Ascending aorta (tissue), 2 donors: ENCODE measurements at regions of chr5 and their contacts with region 1.

Region 1: GRCh38 chr5:74167206-74167929 is 473.2 kb downstream of the ENC1 start:
- DNase-seq: no peak
- H3K4me3 ChIP-seq: no peak overlapping the region
- H3K27ac ChIP-seq: no peak overlapping the region
- H3K4me1 ChIP-seq: no peaks in the 10 kb centered on the region
- H3K27me3 ChIP-seq: no peaks in the 10 kb centered on the region
- CTCF ChIP-seq: no peak

Region 2: DNA sequence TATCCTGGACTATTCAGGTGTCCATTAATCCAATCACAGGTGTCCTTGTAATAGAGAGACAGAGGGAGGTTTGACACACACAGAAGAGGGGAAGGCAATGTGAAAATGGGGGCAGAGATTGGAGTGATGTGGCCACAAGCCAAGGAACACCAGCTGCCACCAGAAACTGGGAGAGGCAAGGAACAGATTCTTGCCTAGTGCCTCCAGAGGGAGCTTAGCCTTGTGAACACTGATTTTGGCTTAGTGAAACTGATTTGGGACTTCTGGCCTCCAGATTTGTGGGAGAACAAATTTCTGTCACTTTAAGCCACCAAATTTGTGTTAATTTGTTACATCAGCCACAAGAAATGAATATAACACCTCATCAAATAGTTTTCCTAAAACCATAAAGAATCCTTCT is 57.0 kb after region 1 on chr5:
- intact Hi-C with region 1: loop called (anchors 5 kb)
- DNase-seq: no peak
- H3K4me3 ChIP-seq: no peak overlapping the region
- H3K27ac ChIP-seq: no peak overlapping the region
- H3K4me1 ChIP-seq: no peaks in the 10 kb centered on the region
- H3K27me3 ChIP-seq: no peaks in the 10 kb centered on the region
- CTCF ChIP-seq: no peak